CD14-positive monocyte (primary cell): ENCODE measurements at regions of chr11 and their contacts with region 1.

Region 1: GRCh38 chr11:10307442-10308207 is 2.8 kb downstream of the ADM start:
- DNase-seq: peak; percentile 82 to 90 (median 87)
- H3K4me3 ChIP-seq: peak overlapping the region; percentile 79 to 97 (median 89)
- H3K4me3 Mint-ChIP-seq: peak overlapping the region; percentile 96 to 99
- H3K27ac ChIP-seq: peak overlapping the region in 1 of 2 donors; percentile 52
- H3K27ac Mint-ChIP-seq: peak overlapping the region; percentile 60 to 90 (median 77)
- H3K4me1 ChIP-seq: peaks cover 40 to 43% of the 10 kb centered on the region in 2 donors
- H3K4me1 Mint-ChIP-seq: peaks cover 32% of the 10 kb centered on the region
- H3K27me3 ChIP-seq: peaks cover 0 to 16% of the 10 kb centered on the region in 2 donors
- H3K27me3 Mint-ChIP-seq: peaks cover 16 to 25% (median 23%) of the 10 kb centered on the region in 3 donors
- CTCF ChIP-seq: peak; percentile 100

Region 2: DNA sequence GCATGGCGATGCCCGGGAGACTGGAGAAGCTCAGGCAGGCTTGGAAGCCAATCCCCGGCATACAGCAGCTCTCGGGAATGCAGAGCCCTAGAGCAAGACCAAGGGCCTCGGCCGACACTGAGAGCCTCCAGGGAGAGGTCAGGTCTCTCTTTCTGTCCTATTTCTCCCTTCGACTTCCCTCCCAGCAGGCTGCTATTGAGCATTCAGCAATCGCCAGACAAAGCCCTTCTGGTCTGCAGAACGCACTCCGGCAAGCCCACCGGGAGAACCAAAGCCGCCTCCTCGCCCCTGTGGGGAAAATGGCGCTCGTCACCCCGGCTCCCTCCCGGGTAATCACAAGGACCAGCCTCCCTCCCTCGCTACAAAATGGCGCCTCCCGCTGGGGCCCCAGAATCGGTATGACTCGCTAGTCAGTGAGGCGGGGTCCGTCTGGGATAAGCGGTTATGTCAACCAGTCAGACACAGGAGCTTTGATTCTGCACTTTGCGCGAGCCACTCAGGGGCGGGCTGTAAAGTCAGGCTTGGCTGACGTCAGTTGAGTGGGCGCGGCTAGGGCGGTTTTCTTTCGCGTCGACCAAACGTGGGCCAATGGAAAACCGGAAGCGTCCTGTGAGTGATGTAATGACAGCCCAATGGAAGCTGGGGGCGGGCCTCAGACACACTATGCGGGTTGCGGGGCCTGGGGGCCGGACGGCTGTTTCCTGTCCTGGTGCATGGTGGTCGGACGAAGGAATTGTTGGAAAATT is 847.1 kb before region 1 on chr11 and contains the start of gene ZNF143:
- intact Hi-C with region 1: loop called in 1 of 2 experiments (anchors 10 kb)
- DNase-seq: peak; percentile 100
- H3K4me3 ChIP-seq: peak within 1 kb of the TSS; percentile 83 to 97 (median 89)
- H3K4me3 Mint-ChIP-seq: peak within 1 kb of the TSS; percentile 91 to 94
- H3K27ac ChIP-seq: peak within 1 kb of the TSS; percentile 94 to 99
- H3K27ac Mint-ChIP-seq: peak within 1 kb of the TSS; percentile 97 to 99 (median 99)
- H3K4me1 ChIP-seq: peaks cover 15 to 25% of the 10 kb centered on the region in 2 donors
- H3K4me1 Mint-ChIP-seq: peaks cover 28% of the 10 kb centered on the region
- H3K27me3 ChIP-seq: no peaks in the 10 kb centered on the region
- H3K27me3 Mint-ChIP-seq: no peaks in the 10 kb centered on the region
- CTCF ChIP-seq: no peak
- polyA plus RNA-seq, gene ZNF143: 26.8 to 30.5 (median 30.1) TPM

Region 3: GRCh38 chr11:9748361-9748970 is 559.2 kb before region 1 on chr11:
- intact Hi-C with region 1: no loop called
- DNase-seq: peak; percentile 57 to 66 (median 63)
- H3K4me3 ChIP-seq: no peak overlapping the region
- H3K4me3 Mint-ChIP-seq: no peak overlapping the region
- H3K27ac ChIP-seq: no peak overlapping the region
- H3K27ac Mint-ChIP-seq: peak overlapping the region in 1 of 7 donors; percentile 43
- H3K4me1 ChIP-seq: peaks cover 17 to 20% of the 10 kb centered on the region in 2 donors
- H3K4me1 Mint-ChIP-seq: peaks cover 30% of the 10 kb centered on the region
- H3K27me3 ChIP-seq: no peaks in the 10 kb centered on the region
- H3K27me3 Mint-ChIP-seq: no peaks in the 10 kb centered on the region
- CTCF ChIP-seq: peak; percentile 75

Region 4: GRCh38 chr11:9861860-9862725 is 445.5 kb before region 1 on chr11:
- intact Hi-C with region 1: loop called in 1 of 2 experiments (anchors 5 kb)
- DNase-seq: peak; percentile 30 to 55 (median 49)
- H3K4me3 ChIP-seq: no peak overlapping the region
- H3K4me3 Mint-ChIP-seq: no peak overlapping the region
- H3K27ac ChIP-seq: no peak overlapping the region
- H3K27ac Mint-ChIP-seq: no peak overlapping the region
- H3K4me1 ChIP-seq: no peaks in the 10 kb centered on the region
- H3K4me1 Mint-ChIP-seq: peaks cover 8% of the 10 kb centered on the region
- H3K27me3 ChIP-seq: no peaks in the 10 kb centered on the region
- H3K27me3 Mint-ChIP-seq: no peaks in the 10 kb centered on the region
- CTCF ChIP-seq: peak; percentile 78

Region 5: GRCh38 chr11:10208131-10208575 is 99.5 kb before region 1 on chr11:
- intact Hi-C with region 1: loop called (anchors 2 to 5 kb)
- DNase-seq: peak; percentile 32 to 61 (median 48)
- H3K4me3 ChIP-seq: no peak overlapping the region
- H3K4me3 Mint-ChIP-seq: no peak overlapping the region
- H3K27ac ChIP-seq: no peak overlapping the region
- H3K27ac Mint-ChIP-seq: no peak overlapping the region
- H3K4me1 ChIP-seq: no peaks in the 10 kb centered on the region
- H3K4me1 Mint-ChIP-seq: peaks cover 2% of the 10 kb centered on the region
- H3K27me3 ChIP-seq: no peaks in the 10 kb centered on the region
- H3K27me3 Mint-ChIP-seq: no peaks in the 10 kb centered on the region
- CTCF ChIP-seq: peak; percentile 81

Region 6: DNA sequence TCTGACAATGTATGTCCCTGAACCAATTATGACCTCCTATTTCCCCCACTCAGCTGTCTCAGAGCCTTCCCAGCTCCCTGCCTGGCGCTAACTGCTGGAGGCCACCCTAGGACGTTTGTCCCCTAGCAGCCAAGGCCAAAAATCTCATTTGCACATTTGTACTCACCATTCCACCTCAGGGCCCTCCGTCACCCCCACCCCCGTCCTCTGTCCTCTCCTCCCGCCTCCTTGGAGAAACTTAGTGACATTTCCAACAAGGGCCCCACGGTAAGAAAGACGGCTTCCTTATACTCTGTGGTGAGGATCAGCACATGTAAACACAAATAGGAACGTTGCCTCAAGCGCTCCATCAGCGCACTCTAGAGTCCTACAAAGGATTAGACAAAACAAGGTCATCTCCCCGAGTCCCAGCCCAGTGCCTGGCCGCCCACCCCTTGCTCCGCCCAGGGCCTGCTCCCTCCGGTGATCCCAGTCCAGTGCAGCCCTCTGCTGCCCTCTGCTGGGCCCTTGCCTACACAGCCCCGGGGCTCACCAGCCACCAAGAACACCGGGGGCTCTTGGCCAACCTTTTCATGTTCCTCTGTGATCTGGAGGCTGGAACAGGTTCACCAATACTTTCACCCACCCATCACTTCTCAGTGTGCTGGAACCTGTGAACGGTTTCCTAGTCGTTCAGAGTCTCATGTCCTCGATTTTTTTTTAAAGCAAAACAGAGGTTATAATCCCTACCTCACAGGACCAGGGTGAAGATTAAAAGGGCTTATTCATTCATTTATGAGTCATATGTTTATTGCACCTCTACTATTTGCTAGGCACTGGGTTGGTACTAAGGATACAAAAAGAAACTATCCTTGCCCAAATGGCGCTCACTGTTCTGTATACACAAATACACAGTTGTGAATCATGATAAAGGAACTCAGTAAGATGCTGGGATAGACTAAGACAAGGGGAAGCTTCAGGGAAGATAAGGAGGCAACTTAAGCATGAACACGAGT is 428.2 kb after region 1 on chr11:
- intact Hi-C with region 1: loop called in 1 of 2 experiments (anchors 5 kb)
- DNase-seq: peak; percentile 79 to 92 (median 88)
- H3K4me3 ChIP-seq: peak overlapping the region in 1 of 3 experiments; percentile 61
- H3K4me3 Mint-ChIP-seq: peak overlapping the region; percentile 56 to 74
- H3K27ac ChIP-seq: no peak overlapping the region
- H3K27ac Mint-ChIP-seq: peak overlapping the region in 6 of 7 donors; percentile 17 to 80 (median 60)
- H3K4me1 ChIP-seq: peaks cover 6 to 10% of the 10 kb centered on the region in 2 donors
- H3K4me1 Mint-ChIP-seq: peaks cover 15% of the 10 kb centered on the region
- H3K27me3 ChIP-seq: no peaks in the 10 kb centered on the region
- H3K27me3 Mint-ChIP-seq: peaks cover 8 to 15% (median 13%) of the 10 kb centered on the region in 3 donors
- CTCF ChIP-seq: peak; percentile 98